Activated naive CD4-positive, alpha-beta T cell treated with anti-CD3 and anti-CD28 coated beads for 36 hours (primary cell): ENCODE measurements at regions of chr6 and their contacts with region 1.

Region 1: GRCh38 chr6:89371849-89372505 is 19.5 kb upstream of the UBE2J1 start:
- DNase-seq: peak; percentile 81
- H3K4me3 Mint-ChIP-seq: no peak overlapping the region
- H3K27ac Mint-ChIP-seq: no peak overlapping the region
- H3K4me1 Mint-ChIP-seq: peaks cover 15% of the 10 kb centered on the region
- H3K27me3 Mint-ChIP-seq: no peaks in the 10 kb centered on the region

Region 2: DNA sequence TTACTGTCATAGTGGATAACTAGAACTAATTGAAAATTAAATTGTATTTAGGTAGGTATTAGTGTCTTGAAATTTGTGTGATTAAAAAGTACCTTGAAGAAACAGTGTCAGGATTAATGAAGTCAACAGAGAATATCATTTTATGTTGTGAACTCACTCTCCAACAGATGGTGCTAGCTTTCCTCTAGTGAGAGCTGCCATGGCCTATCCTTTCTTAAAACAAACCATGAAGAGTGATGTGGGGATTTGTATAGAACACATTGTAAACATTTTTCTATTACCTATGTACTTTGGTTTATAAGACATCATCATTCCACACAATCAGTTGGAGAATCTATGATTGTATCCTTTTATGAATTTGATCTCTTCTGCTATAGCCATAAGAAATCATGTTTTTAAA is 249.4 kb before region 1 on chr6:
- CTCF ChIA-PET with region 1: interaction called, 3 read pairs
- intact Hi-C with region 1: loop called (anchors 5 kb)
- DNase-seq: peak; percentile 21
- H3K4me3 Mint-ChIP-seq: no peak overlapping the region
- H3K27ac Mint-ChIP-seq: no peak overlapping the region
- H3K4me1 Mint-ChIP-seq: no peaks in the 10 kb centered on the region
- H3K27me3 Mint-ChIP-seq: no peaks in the 10 kb centered on the region

Region 3: DNA sequence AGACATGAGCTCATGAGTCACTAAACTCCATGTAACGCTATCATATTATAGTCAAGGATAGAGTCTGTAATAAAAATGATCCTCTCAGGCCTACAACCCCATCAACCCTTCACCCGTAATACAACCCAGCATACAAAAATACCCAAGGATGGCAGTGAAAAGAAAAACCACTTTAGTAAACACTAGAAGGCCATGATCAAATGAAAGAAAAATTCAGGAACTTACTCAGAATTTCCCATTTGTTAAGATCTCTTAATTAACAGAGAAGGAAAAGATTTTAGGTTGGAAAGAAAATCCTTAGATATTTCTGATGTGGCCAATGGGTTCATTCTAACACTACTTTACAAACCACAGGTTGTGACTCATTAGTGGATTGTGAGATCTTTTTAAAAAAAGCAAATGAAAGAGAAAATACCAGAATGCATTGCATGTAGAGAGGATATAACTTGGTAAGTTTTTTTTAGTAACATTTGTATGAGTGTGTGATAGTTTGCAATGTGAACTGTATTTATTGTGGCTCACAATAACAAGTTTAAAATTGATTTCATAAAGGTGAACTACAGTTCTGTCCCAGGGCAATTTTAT is 11.5 kb before region 1 on chr6:
- CTCF ChIA-PET with region 1: interaction called, 41 read pairs
- intact Hi-C with region 1: no loop called
- DNase-seq: no peak
- H3K4me3 Mint-ChIP-seq: no peak overlapping the region
- H3K27ac Mint-ChIP-seq: peak overlapping the region; percentile 67
- H3K4me1 Mint-ChIP-seq: peaks cover 61% of the 10 kb centered on the region
- H3K27me3 Mint-ChIP-seq: no peaks in the 10 kb centered on the region

Region 4: GRCh38 chr6:89406141-89406540 is 34.2 kb after region 1 on chr6:
- CTCF ChIA-PET with region 1: interaction called, 20 read pairs
- intact Hi-C with region 1: loop called (anchors 1 kb)
- DNase-seq: no peak
- H3K4me3 Mint-ChIP-seq: no peak overlapping the region
- H3K27ac Mint-ChIP-seq: no peak overlapping the region
- H3K4me1 Mint-ChIP-seq: peaks cover 11% of the 10 kb centered on the region
- H3K27me3 Mint-ChIP-seq: no peaks in the 10 kb centered on the region

Region 5: DNA sequence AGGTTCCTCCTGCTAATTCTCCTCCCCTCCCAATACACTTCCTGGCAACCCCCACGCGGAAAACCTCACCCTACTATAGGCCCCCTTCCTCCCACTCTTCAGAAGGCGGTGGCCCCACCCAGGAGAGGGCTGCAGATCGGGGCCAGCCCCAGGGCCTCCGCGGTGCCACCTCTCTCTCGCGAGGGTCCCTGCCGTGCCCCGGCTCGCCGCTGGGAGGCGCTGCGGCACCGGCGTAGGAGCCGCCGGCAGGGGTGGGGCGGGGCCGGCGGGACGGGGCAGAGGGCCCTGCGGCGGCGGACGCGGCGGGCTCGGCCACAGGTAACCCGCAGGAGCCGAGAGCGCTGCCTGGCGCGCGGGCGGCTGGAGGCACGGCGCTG is 60.9 kb after region 1 on chr6 and contains the start of gene ANKRD6:
- CTCF ChIA-PET with region 1: interaction called, 26 read pairs
- intact Hi-C with region 1: loop called (anchors 2 kb)
- DNase-seq: peak; percentile 77
- H3K4me3 Mint-ChIP-seq: peak within 1 kb of the TSS; percentile 69
- H3K27ac Mint-ChIP-seq: no peak within 1 kb of the TSS
- H3K4me1 Mint-ChIP-seq: peaks cover 10% of the 10 kb centered on the region
- H3K27me3 Mint-ChIP-seq: no peaks in the 10 kb centered on the region
- total RNA-seq, gene ANKRD6: 1.5 to 1.6 TPM

Region 6: GRCh38 chr6:89610149-89610642 is 238.2 kb after region 1 on chr6:
- CTCF ChIA-PET with region 1: interaction called, 22 read pairs
- intact Hi-C with region 1: loop called (anchors 1 kb)
- DNase-seq: peak; percentile 84
- H3K4me3 Mint-ChIP-seq: no peak overlapping the region
- H3K27ac Mint-ChIP-seq: no peak overlapping the region
- H3K4me1 Mint-ChIP-seq: no peaks in the 10 kb centered on the region
- H3K27me3 Mint-ChIP-seq: no peaks in the 10 kb centered on the region

Region 7: GRCh38 chr6:89970609-89971337 is 598.8 kb after region 1 on chr6:
- CTCF ChIA-PET with region 1: no interaction called
- intact Hi-C with region 1: no loop called
- DNase-seq: peak; percentile 36
- H3K4me3 Mint-ChIP-seq: no peak overlapping the region
- H3K27ac Mint-ChIP-seq: no peak overlapping the region
- H3K4me1 Mint-ChIP-seq: peaks cover 54% of the 10 kb centered on the region
- H3K27me3 Mint-ChIP-seq: no peaks in the 10 kb centered on the region